MCF 10A (cell line): ENCODE measurements at regions of chr2 and their contacts with region 1.

Region 1: DNA sequence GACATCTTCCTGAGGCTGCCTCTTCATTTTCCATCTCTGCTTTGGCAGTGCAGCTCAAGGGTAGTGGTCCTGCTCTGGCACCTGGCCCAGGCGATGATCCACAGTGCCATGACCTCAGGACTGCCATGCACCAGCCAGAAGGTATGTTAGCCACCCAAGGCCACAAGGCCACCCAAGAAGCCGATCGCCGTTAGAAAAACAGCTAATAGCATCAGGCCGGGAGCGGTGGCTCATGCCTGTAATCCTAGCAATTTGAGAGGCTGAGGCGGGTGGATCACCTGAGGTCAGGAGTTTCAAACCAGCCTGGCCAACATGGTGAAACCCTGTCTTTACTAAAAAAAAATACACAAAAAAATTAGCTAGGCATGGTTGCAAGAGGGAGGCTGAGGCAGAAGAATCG is 28.4 kb upstream of the UGGT1 start:
- DNase-seq: no peak
- H3K4me3 Mint-ChIP-seq: no peak overlapping the region
- H3K27ac Mint-ChIP-seq: no peak overlapping the region
- H3K4me1 Mint-ChIP-seq: no peaks in the 10 kb centered on the region
- H3K27me3 Mint-ChIP-seq: no peaks in the 10 kb centered on the region
- CTCF ChIP-seq: no peak

Region 2: DNA sequence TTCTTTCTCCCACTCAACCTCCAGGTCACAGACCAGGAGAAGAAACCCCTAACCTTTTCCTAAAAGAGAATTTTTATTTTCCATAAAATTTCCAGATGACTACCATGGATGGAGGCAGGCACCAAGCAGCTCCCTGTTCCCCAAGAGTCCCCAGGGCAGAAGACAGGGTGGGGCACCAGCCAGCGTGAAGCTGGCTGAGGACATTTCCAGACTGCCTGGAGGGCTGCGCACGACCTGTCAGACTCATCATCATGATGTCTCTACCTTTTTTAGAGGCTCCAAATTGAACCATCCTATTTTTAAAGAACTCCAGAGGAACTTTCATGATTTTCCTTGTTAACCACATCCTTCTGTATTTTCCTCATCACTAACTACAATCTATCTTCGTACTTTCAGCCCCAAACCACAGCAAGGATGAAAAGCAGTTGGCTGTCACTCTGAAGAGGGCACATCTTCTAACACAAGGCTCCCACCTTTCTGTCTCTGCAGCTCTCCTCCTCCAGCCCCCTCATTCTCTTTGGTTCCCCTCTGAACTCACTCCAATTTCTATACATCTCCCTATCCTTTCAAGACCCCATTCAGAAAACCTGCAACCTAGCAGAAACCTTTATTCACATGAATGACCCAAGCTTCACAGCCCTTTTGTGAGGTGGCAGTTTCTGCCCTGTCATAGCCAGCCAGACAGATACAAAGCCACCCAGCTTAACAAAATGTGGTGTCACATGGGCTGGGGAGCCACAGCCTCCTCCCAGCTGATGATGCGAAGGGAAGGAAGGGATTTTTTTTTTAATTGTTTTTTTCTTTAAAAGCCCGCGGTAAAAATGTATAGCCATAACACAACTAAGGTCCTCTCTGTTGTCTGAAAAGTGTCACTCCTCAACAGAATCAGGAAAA is 187.9 kb before region 1 on chr2:
- CTCF ChIA-PET with region 1: no interaction called
- POLR2A ChIA-PET with region 1: no interaction called
- intact Hi-C with region 1: no loop called
- DNase-seq: no peak
- H3K4me3 Mint-ChIP-seq: no peak overlapping the region
- H3K27ac Mint-ChIP-seq: peak overlapping the region; percentile 84
- H3K4me1 Mint-ChIP-seq: peaks cover 12% of the 10 kb centered on the region
- H3K27me3 Mint-ChIP-seq: no peaks in the 10 kb centered on the region
- CTCF ChIP-seq: no peak

Region 3: DNA sequence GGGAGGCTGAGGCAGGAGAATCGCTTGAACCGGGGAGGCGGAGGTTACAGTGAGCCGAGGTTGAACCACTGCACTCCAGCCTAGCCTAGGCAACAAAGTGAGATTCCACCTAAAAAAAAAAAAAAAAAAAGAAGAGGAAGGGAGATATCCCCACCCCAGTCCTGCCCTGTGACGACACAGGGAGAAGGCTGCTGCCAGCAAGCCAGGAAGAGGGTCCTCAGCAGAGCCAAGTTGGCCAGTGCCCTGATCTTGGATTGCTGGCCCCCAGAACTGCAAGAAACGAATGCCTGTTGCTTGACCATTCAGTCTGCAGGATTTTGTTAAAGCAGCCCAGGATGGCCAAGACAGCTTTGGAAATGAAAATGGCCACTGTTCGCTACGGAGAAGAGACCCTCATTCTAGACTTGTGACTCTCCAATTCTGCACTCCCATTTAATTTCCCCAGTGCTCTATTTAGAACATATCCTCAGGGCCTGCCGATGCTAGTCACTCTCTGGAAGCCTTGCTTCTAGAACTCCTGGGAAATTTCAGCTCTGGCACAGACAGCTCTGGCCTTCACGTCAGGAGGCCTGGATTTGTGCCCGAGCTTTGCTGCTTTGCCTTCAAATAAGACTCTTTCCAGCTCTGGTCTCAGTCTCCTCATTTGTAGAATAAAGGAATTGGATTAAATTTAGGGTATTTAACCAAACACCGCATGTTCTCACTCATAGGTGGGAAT is 161.1 kb before region 1 on chr2:
- CTCF ChIA-PET with region 1: no interaction called
- POLR2A ChIA-PET with region 1: no interaction called
- intact Hi-C with region 1: no loop called
- DNase-seq: no peak
- H3K4me3 Mint-ChIP-seq: no peak overlapping the region
- H3K27ac Mint-ChIP-seq: no peak overlapping the region
- H3K4me1 Mint-ChIP-seq: no peaks in the 10 kb centered on the region
- H3K27me3 Mint-ChIP-seq: no peaks in the 10 kb centered on the region
- CTCF ChIP-seq: no peak

Region 4: GRCh38 chr2:128076461-128077106 is 14.0 kb after region 1 on chr2:
- CTCF ChIA-PET with region 1: interaction called, 11 read pairs
- POLR2A ChIA-PET with region 1: no interaction called
- intact Hi-C with region 1: no loop called
- DNase-seq: peak; percentile 6
- H3K4me3 Mint-ChIP-seq: no peak overlapping the region
- H3K27ac Mint-ChIP-seq: no peak overlapping the region
- H3K4me1 Mint-ChIP-seq: no peaks in the 10 kb centered on the region
- H3K27me3 Mint-ChIP-seq: no peaks in the 10 kb centered on the region
- CTCF ChIP-seq: no peak

Region 5: DNA sequence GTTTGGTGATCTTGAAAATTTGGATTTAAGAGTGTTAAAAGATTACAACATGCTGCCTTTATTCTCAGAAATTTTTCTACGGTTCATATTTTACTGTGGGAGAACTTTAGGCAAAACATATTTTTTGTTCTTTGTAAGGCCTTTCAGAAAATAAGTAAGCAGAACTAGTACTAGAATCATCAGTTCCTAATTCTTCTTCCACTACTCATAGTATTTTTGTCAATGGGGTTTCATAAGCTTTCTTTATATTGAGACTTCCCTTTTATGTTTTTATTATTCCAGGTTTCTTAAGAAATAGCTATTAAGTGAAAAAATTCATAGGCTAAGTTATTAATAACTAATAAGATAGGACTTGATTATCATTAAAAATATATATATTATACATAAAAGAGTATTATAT is 40.8 kb after region 1 on chr2:
- CTCF ChIA-PET with region 1: interaction called, 11 read pairs
- POLR2A ChIA-PET with region 1: no interaction called
- intact Hi-C with region 1: no loop called
- DNase-seq: no peak
- H3K4me3 Mint-ChIP-seq: no peak overlapping the region
- H3K27ac Mint-ChIP-seq: no peak overlapping the region
- H3K4me1 Mint-ChIP-seq: no peaks in the 10 kb centered on the region
- H3K27me3 Mint-ChIP-seq: no peaks in the 10 kb centered on the region
- CTCF ChIP-seq: no peak

Region 6: DNA sequence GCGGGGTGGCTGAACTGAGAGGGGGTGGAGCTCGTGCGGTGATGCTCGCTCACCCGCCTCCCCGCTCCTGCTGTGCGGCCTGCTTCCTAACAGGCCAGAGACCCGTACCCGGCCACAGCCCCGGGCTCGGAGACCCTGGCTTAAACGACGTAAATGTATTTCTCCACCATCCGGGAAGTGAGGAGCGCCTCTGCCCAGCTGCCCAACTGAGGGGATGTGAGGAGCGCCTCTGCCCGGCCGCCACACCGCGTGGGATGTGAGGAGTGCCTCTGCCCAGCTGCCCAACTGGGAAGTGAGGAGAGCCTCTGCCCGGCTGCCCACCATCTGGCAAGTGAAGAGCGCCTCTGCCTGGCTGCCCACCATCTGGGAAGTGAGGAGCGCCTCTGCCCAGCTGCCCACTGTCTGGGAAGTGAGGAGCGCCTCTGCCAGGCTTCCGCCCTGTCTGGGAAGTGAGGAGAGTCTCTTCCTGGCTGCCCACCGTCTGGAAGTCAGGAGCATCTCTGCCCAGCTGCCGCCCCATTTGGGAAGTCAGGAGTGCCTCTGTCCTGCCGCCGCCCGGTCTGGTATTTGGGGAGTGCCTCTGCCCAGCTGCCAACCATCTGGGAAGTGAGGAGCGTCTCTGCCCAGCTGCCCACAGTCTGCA is 145.6 kb after region 1 on chr2:
- CTCF ChIA-PET with region 1: no interaction called
- POLR2A ChIA-PET with region 1: no interaction called
- intact Hi-C with region 1: no loop called
- DNase-seq: no peak
- H3K4me3 Mint-ChIP-seq: no peak overlapping the region
- H3K27ac Mint-ChIP-seq: no peak overlapping the region
- H3K4me1 Mint-ChIP-seq: no peaks in the 10 kb centered on the region
- H3K27me3 Mint-ChIP-seq: no peaks in the 10 kb centered on the region
- CTCF ChIP-seq: no peak

Region 7: GRCh38 chr2:128232965-128233789 is 170.6 kb after region 1 on chr2:
- CTCF ChIA-PET with region 1: interaction called, 4 read pairs
- POLR2A ChIA-PET with region 1: no interaction called
- intact Hi-C with region 1: loop called (anchors 1 kb)
- DNase-seq: peak; percentile 71
- H3K4me3 Mint-ChIP-seq: peak overlapping the region; percentile 68
- H3K27ac Mint-ChIP-seq: no peak overlapping the region
- H3K4me1 Mint-ChIP-seq: peaks cover 8% of the 10 kb centered on the region
- H3K27me3 Mint-ChIP-seq: no peaks in the 10 kb centered on the region
- CTCF ChIP-seq: peak; percentile 82

Region 8: DNA sequence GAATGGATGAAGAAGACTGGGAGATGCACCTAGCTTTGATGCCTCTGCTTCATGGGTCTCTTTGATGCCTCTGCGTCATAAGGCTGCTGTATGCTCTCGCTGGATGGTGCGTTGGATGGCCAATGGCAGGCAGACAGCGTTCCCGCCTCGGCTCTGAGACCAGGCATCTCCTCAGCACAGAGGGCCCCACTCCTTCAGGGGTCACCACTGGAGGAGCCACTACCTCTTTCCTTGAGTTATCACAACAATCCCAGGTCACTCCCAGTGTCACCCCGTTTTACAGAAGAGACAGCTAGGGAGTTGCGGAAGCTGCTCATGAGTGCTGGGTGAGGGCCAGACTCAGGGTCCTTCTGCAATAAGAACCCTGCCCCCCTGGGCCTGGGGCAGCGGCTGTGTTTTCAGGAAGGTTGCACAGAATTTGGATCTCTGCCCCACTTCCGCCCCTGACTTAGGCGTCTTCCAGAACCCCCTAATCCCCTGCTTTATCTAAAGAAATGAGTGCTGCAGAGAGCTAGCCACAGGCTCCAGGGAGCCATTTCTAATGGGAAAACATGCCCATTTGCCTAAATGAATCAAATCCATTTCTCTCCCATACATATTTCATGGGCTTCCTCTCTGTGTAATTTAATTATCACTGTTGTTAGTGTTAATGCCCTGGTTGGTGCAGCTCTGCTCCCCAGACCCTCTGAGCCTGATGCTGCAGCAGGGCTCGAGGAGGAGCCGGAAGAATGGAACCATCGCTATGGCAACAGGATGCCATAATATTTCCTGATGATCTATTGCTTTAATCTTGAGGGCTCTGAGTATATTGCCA is 387.8 kb after region 1 on chr2:
- CTCF ChIA-PET with region 1: no interaction called
- POLR2A ChIA-PET with region 1: no interaction called
- intact Hi-C with region 1: no loop called
- DNase-seq: no peak
- H3K4me3 Mint-ChIP-seq: no peak overlapping the region
- H3K27ac Mint-ChIP-seq: no peak overlapping the region
- H3K4me1 Mint-ChIP-seq: no peaks in the 10 kb centered on the region
- H3K27me3 Mint-ChIP-seq: no peaks in the 10 kb centered on the region
- CTCF ChIP-seq: no peak